Activated naive CD4-positive, alpha-beta T cell treated with anti-CD3 and anti-CD28 coated beads, Interleukin-2, amount 10 ng/mL, durations not matched to agents 7 days and 5 days (primary cell): ENCODE measurements at regions of chr1 and their contacts with region 1.

Region 1: DNA sequence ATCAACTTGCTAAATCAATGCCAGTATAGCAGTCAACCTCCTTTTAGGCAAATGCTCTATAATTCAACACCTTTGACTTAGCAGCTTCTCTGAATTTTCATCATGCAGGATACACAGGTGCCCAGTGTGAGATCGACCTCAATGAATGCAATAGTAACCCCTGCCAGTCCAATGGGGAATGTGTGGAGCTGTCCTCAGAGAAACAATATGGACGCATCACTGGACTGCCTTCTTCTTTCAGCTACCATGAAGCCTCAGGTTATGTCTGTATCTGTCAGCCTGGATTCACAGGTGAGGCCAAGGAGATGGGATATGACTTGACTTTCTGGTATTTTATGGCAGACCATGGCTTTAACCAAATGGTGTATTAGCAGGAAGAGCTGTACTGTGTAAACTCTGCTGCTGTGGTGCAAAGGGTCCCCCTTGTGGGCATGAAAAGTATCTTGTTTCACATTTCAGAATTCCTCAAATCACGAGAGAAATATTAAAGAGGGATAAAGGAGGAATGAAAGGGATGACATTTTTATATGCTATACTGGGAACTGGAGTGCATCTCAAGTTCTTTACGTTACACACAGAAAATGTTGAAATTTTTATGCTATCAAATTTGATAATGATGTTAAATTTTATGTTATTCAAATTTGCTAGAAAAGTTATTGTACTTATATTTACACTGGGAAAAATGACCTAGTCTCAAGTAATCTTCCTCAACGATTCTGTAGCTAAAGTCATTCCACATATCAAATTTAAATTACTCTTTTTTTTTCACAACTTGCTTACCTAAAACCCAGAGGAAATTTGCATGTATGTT is 88.9 kb downstream of the CRB1 start:
- DNase-seq: peak; percentile 50
- H3K4me3 Mint-ChIP-seq: no peak overlapping the region
- H3K27ac Mint-ChIP-seq: no peak overlapping the region
- H3K4me1 Mint-ChIP-seq: no peaks in the 10 kb centered on the region
- H3K27me3 Mint-ChIP-seq: no peaks in the 10 kb centered on the region

Region 2: DNA sequence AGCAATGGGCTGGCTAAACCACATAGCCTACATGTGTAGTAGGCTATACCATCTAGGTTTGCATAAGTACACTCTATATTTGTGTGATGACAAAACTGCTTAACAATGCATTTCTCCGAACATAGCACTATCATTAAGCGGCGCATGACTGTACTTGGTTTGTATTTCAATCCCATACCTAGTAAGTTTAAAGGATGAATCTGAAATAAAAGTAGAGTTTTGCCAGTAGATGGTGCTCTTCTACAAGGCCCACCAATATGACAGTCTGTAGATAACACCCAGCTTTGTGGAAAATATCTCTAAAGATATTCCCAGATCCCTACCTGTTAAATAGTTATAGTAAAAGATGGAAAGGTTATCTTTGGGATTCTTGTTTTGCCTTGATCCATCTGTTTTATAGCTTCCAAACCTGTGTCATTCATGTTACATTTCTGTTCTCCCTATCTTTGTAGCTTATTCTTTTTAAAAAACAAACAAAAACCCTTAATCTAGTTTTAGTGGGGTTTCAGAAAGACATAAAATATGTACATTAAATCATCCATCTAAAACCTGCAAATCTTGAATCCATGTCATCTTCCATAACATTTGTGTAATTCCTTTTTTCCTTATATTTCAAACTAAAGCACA is 176.6 kb before region 1 on chr1:
- CTCF ChIA-PET with region 1: interaction called, 25 read pairs
- DNase-seq: no peak
- H3K4me3 Mint-ChIP-seq: no peak overlapping the region
- H3K27ac Mint-ChIP-seq: no peak overlapping the region
- H3K4me1 Mint-ChIP-seq: no peaks in the 10 kb centered on the region
- H3K27me3 Mint-ChIP-seq: no peaks in the 10 kb centered on the region

Region 3: DNA sequence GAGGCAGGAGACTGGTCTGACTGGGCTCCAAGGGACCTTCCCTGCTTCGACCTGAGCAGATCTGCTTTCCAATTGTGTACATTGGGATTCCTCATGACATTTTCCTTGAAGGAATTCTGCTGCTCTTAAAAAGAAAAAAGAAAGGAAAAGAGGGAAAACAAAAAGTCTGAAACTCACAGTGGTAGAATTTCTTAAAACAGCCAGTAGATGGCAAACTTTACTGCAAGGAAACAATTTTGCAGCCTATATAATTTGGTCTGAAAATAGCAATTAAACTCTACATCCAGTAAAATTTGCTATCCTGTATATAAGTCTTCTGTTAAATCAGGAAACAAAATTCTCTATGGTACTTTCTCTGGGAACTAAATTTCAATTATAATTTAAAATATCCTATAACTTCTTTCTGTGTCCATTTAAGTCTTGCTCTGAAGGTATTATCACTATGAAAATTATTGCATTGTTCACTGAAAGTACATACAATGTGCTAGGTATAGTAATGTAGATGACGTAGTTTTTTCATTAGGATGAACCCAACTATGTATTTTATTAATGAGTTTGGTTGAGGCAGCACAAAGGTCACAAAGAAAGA is 29.1 kb before region 1 on chr1:
- CTCF ChIA-PET with region 1: interaction called, 14 read pairs
- DNase-seq: no peak
- H3K4me3 Mint-ChIP-seq: no peak overlapping the region
- H3K27ac Mint-ChIP-seq: no peak overlapping the region
- H3K4me1 Mint-ChIP-seq: no peaks in the 10 kb centered on the region
- H3K27me3 Mint-ChIP-seq: peaks cover 7% of the 10 kb centered on the region

Region 4: DNA sequence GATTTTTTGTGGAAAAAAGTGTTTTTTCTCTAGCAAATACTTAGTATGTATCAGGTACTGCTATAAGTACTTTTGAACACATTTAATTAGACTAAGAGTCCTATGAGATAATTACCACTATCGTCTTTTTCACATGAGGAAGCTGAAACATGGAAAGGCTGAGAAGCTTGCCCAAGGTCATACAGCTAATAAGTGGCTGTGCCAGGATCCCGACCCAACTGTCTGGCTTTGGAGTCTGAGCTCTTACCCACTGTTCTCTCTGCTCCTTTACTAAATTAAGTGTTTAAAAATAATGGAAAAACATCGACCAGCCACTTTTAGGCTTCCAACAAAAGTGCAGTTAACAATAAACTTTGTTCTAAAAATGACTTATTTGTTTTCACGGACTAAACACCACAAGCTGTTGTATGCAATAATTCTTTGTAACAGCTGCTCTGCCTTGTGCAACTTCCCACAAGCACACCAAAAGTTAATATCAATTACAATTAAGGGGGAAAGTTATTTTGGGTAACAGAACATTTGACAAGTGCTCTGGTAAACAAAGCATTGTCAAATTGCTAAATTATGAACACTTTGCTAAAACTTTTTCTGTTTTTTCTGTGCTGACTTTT is 13.2 kb before region 1 on chr1:
- CTCF ChIA-PET with region 1: interaction called, 11 read pairs
- DNase-seq: no peak
- H3K4me3 Mint-ChIP-seq: no peak overlapping the region
- H3K27ac Mint-ChIP-seq: no peak overlapping the region
- H3K4me1 Mint-ChIP-seq: peaks cover 7% of the 10 kb centered on the region
- H3K27me3 Mint-ChIP-seq: no peaks in the 10 kb centered on the region

Region 5: GRCh38 chr1:197391303-197392226 is 34.6 kb after region 1 on chr1:
- CTCF ChIA-PET with region 1: no interaction called
- DNase-seq: peak; percentile 22
- H3K4me3 Mint-ChIP-seq: no peak overlapping the region
- H3K27ac Mint-ChIP-seq: peak overlapping the region; percentile 86
- H3K4me1 Mint-ChIP-seq: peaks cover 26% of the 10 kb centered on the region
- H3K27me3 Mint-ChIP-seq: no peaks in the 10 kb centered on the region

Region 6: DNA sequence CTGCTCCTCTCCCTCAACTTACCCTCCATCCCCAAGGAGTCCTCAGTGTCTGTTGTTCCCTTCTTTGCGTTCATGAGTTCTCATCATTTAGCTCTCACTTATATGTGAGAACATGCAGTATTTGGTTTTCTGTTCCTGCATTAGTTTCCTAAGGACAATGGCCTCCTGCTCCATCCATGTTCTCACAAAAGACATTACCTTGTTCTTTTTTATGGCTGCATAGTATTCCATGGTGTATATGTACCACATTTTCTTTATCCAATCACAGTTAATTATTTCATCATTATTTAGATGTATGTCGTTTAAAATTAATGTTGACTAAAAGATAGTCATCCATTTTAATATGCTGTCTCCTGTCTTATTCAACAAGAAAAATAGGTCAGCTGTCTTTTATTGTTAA is 45.3 kb after region 1 on chr1:
- CTCF ChIA-PET with region 1: no interaction called
- DNase-seq: no peak
- H3K4me3 Mint-ChIP-seq: no peak overlapping the region
- H3K27ac Mint-ChIP-seq: no peak overlapping the region
- H3K4me1 Mint-ChIP-seq: peaks cover 4% of the 10 kb centered on the region
- H3K27me3 Mint-ChIP-seq: peaks cover 6% of the 10 kb centered on the region